ENCODE measurements at regions of chr21 and their contacts with region 1.

Region 1: GRCh38 chr21:42905195-42905594 is 12.1 kb downstream of the NDUFV3 start:
- DNase-seq: no peak
- ATAC-seq: no peak
- H3K4me3 ChIP-seq: no peak overlapping the region
- H3K27ac ChIP-seq: no peak overlapping the region
- H3K4me1 ChIP-seq: peaks cover 0 to 8% (median 2%) of the 10 kb centered on the region in 12 donors
- H3K27me3 ChIP-seq: no peaks in the 10 kb centered on the region
- CTCF ChIP-seq: no peak
- POLR2A ChIP-seq: no peak

Region 2: GRCh38 chr21:42850866-42851391 is 54.3 kb before region 1 on chr21:
- intact Hi-C with region 1: no loop called
- DNase-seq: no peak
- ATAC-seq: peak in 3 of 4 donors; percentile 9 to 33 (median 10)
- H3K4me3 ChIP-seq: no peak overlapping the region
- H3K27ac ChIP-seq: no peak overlapping the region
- H3K4me1 ChIP-seq: no peaks in the 10 kb centered on the region
- H3K27me3 ChIP-seq: no peaks in the 10 kb centered on the region
- CTCF ChIP-seq: peak in 6 of 12 donors; percentile 7 to 34 (median 23)
- POLR2A ChIP-seq: no peak

Region 3: GRCh38 chr21:42964546-42965225 is 59.5 kb after region 1 on chr21:
- intact Hi-C with region 1: loop called in 1 of 10 experiments (anchors 10 kb)
- DNase-seq: no peak
- ATAC-seq: no peak
- H3K4me3 ChIP-seq: no peak overlapping the region
- H3K27ac ChIP-seq: no peak overlapping the region
- H3K4me1 ChIP-seq: no peaks in the 10 kb centered on the region
- H3K27me3 ChIP-seq: no peaks in the 10 kb centered on the region
- CTCF ChIP-seq: no peak
- POLR2A ChIP-seq: no peak

Region 4: GRCh38 chr21:43634618-43635017 is 729.4 kb after region 1 on chr21:
- intact Hi-C with region 1: no loop called
- DNase-seq: no peak
- ATAC-seq: no peak
- H3K4me3 ChIP-seq: no peak overlapping the region
- H3K27ac ChIP-seq: no peak overlapping the region
- H3K4me1 ChIP-seq: no peaks in the 10 kb centered on the region
- H3K27me3 ChIP-seq: no peaks in the 10 kb centered on the region
- CTCF ChIP-seq: no peak
- POLR2A ChIP-seq: no peak